CD8-positive, alpha-beta memory T cell (primary cell): ENCODE measurements at regions of chr11 and their contacts with region 1.

Region 1: GRCh38 chr11:72793425-72794367 is at the start of gene STARD10:
- DNase-seq: peak; percentile 91 to 96 (median 95)
- H3K4me3 ChIP-seq: peak within 1 kb of the TSS; percentile 97
- H3K4me3 Mint-ChIP-seq: peak within 1 kb of the TSS; percentile 96 to 100 (median 98)
- H3K27ac ChIP-seq: peak within 1 kb of the TSS; percentile 97
- H3K27ac Mint-ChIP-seq: peak within 1 kb of the TSS; percentile 97 to 100 (median 100)
- H3K4me1 ChIP-seq: peaks cover 20% of the 10 kb centered on the region
- H3K4me1 Mint-ChIP-seq: peaks cover 23 to 32% (median 27%) of the 10 kb centered on the region in 3 donors
- H3K27me3 ChIP-seq: no peaks in the 10 kb centered on the region
- H3K27me3 Mint-ChIP-seq: no peaks in the 10 kb centered on the region
- total RNA-seq, gene STARD10: 13.8 to 15.9 TPM

Region 2: DNA sequence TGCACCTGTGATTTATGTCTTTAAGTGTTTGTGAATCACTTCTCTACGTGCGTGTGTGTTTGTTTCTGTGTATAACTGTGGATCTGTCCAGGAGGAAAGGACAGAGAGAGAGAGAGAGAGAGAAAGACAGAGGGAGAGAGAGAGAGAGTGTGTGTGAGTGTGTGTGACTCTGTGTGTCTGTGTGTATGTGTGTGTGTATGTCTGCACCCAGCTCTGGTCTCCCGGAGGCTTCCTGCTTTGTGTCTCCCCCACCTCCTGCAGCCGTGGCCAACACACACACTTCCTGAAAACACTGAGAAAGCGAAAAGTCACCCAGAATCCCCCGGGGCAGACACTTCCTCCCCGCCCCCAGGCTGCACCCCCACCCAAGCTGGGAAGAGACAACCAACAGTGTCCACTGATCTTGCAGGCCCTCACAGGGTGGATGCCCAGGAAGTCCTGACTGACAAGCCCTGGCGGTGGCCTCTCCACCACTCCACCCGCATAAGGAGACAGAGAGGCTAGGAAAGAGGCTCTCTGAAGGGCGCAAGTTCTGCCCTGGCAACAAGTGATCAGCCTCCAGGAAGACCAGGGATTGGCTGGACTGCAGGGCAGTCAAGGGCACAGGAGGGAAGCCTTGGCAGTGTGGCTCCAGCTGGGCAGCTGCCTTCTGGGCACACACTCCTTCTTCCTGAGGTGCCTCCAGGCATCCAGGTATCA is 71.5 kb before region 1 on chr11:
- CTCF ChIA-PET with region 1: interaction called, 62 read pairs
- POLR2A ChIA-PET with region 1: interaction called, 15 read pairs
- DNase-seq: peak; percentile 75 to 92 (median 87)
- H3K4me3 ChIP-seq: peak overlapping the region; percentile 81
- H3K4me3 Mint-ChIP-seq: peak overlapping the region; percentile 89 to 95 (median 92)
- H3K27ac ChIP-seq: peak overlapping the region; percentile 84
- H3K27ac Mint-ChIP-seq: peak overlapping the region; percentile 87 to 99 (median 96)
- H3K4me1 ChIP-seq: peaks cover 53% of the 10 kb centered on the region
- H3K4me1 Mint-ChIP-seq: peaks cover 57 to 86% (median 62%) of the 10 kb centered on the region in 3 donors
- H3K27me3 ChIP-seq: no peaks in the 10 kb centered on the region
- H3K27me3 Mint-ChIP-seq: peaks cover 0 to 9% of the 10 kb centered on the region in 2 donors

Region 3: DNA sequence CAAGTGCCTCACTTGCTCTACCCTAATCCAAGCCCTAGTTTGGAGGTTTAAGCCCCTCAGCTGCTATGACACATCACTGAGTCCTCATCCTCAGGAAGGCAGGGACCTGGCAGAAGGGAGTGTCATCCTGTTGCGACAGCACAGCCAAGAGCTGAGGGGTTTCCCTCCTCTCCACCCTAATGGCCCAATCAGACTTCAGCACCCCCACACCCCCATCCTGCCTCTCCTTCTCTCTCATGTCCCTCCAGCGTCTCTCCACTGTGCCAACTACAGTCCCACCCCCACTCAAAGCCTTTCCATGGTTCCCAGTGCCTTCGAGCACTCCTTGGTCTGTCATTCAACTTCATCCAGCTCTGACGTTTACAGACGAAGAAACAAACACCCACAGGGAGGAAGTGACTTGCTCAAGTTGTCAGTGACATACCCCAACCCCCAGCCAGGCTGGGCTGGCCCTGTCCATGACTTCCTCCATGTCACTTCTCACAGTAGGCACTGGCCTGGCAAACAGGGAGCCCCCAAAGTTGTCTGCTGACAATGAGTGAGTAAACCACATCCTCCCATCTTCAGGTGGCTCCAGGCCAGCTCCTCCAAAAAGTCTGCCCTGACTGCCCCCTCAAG is 57.1 kb before region 1 on chr11:
- CTCF ChIA-PET with region 1: interaction called, 15 read pairs
- POLR2A ChIA-PET with region 1: no interaction called
- DNase-seq: peak; percentile 66 to 89 (median 84)
- H3K4me3 ChIP-seq: peak overlapping the region; percentile 32
- H3K4me3 Mint-ChIP-seq: peak overlapping the region; percentile 9 to 89 (median 61)
- H3K27ac ChIP-seq: peak overlapping the region; percentile 81
- H3K27ac Mint-ChIP-seq: peak overlapping the region; percentile 97 to 100 (median 98)
- H3K4me1 ChIP-seq: peaks cover 63% of the 10 kb centered on the region
- H3K4me1 Mint-ChIP-seq: peaks cover 52 to 76% (median 55%) of the 10 kb centered on the region in 3 donors
- H3K27me3 ChIP-seq: no peaks in the 10 kb centered on the region
- H3K27me3 Mint-ChIP-seq: no peaks in the 10 kb centered on the region

Region 4: DNA sequence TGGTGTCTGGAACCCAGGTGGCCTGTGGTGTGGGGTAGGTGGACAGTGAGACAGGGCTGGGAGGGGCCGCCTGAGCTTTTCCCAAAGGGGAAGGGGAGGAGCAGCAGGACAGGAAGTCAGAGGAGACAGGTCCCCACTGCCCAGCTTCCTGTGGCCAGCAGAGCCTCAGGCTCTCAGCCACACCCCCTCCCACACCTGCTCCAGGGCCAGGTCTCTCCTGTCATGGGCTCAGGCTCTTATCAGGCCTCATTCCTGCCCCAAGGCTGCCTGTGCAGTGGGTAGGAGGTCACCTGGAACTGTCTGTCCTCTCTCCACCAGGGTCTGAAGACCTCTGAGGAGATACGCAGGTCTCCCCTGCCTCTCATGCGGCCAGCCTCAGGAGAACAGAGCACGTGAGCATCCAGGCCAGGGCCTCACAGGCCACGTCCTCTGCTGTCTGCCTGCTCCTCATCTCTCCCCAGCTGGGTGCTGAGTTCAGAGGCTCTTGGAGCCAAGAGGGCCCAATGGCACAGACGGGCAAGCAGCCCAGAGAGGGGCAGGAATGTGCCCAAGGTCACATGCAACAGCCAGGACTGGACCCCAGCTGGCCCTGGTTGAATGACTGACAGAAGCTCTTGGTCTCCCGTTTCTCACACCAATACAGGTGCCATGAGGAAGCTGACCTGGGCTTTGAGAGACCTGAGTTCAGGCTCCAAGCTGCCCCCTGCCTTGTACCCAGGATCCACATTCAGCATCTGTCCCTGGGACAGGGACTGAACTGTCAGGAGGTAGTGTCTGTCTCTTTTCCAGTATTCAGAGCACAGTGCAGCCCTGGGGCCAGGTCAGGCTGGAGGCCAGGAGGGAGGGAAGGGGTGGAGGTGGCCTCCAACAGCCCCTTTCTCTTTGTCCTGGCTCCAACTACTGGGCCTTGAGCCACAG is 16.6 kb before region 1 on chr11:
- CTCF ChIA-PET with region 1: interaction called, 10 read pairs
- POLR2A ChIA-PET with region 1: no interaction called
- DNase-seq: no peak
- H3K4me3 ChIP-seq: no peak overlapping the region
- H3K4me3 Mint-ChIP-seq: peak overlapping the region in 1 of 7 donors; percentile 40
- H3K27ac ChIP-seq: peak overlapping the region; percentile 79
- H3K27ac Mint-ChIP-seq: peak overlapping the region in 3 of 8 donors; percentile 25 to 66 (median 33)
- H3K4me1 ChIP-seq: peaks cover 16% of the 10 kb centered on the region
- H3K4me1 Mint-ChIP-seq: peaks cover 28 to 55% (median 38%) of the 10 kb centered on the region in 3 donors
- H3K27me3 ChIP-seq: no peaks in the 10 kb centered on the region
- H3K27me3 Mint-ChIP-seq: no peaks in the 10 kb centered on the region

Region 5: GRCh38 chr11:72814286-72815109 is 20.8 kb after region 1 on chr11 and contains the start of gene ATG16L2:
- CTCF ChIA-PET with region 1: interaction called, 22 read pairs
- POLR2A ChIA-PET with region 1: interaction called, 3 read pairs
- DNase-seq: peak; percentile 85 to 93 (median 90)
- H3K4me3 ChIP-seq: peak within 1 kb of the TSS; percentile 95
- H3K4me3 Mint-ChIP-seq: peak within 1 kb of the TSS; percentile 96 to 100 (median 99)
- H3K27ac ChIP-seq: peak within 1 kb of the TSS; percentile 99
- H3K27ac Mint-ChIP-seq: peak within 1 kb of the TSS; percentile 99 to 100 (median 100)
- H3K4me1 ChIP-seq: peaks cover 18% of the 10 kb centered on the region
- H3K4me1 Mint-ChIP-seq: peaks cover 44 to 65% (median 58%) of the 10 kb centered on the region in 3 donors
- H3K27me3 ChIP-seq: no peaks in the 10 kb centered on the region
- H3K27me3 Mint-ChIP-seq: peaks cover 0 to 5% of the 10 kb centered on the region in 2 donors
- total RNA-seq, gene ATG16L2: 50.3 to 53.2 TPM

Region 6: DNA sequence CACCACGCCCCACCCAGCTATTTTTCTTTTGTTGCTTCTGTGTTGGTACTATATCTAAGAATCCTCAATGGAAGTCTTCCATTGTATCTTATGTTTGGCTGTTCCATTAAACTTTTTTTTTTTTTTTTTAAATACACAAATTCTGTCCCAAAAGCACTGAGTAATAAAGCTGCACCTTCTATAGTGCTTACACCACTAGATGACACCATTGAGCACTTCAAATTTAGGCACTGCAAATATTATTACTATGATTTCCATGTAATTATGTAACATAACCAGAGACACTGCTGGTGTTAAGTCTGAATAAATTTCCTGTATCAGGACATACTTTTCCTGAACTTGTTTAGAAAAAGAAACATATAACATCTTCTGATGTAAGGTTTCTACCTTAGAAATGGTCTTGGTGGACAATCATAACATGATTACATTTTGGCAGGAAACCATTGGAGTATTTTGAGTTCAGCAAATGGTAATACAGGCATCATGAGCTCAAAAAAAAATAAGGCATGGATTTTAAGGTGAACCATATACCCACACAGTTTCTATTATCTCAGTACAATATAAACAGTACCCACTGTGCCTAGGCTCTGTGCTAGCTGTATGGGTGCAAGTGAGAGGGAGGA is 131.0 kb after region 1 on chr11:
- CTCF ChIA-PET with region 1: no interaction called
- POLR2A ChIA-PET with region 1: no interaction called
- DNase-seq: peak in 1 of 5 donors; percentile 10
- H3K4me3 ChIP-seq: no peak overlapping the region
- H3K4me3 Mint-ChIP-seq: no peak overlapping the region
- H3K27ac ChIP-seq: no peak overlapping the region
- H3K27ac Mint-ChIP-seq: peak overlapping the region in 3 of 8 donors; percentile 48 to 61 (median 59)
- H3K4me1 ChIP-seq: no peaks in the 10 kb centered on the region
- H3K4me1 Mint-ChIP-seq: peaks cover 4 to 9% (median 6%) of the 10 kb centered on the region in 3 donors
- H3K27me3 ChIP-seq: no peaks in the 10 kb centered on the region
- H3K27me3 Mint-ChIP-seq: no peaks in the 10 kb centered on the region